ENCODE measurements at regions of chr3 and their contacts with region 1.

Region 1: GRCh38 chr3:123046262-123047061 is 18.9 kb upstream of the SEMA5B start:
- DNase-seq: no peak
- ATAC-seq: no peak
- H3K4me3 Mint-ChIP-seq: no peak overlapping the region
- H3K27ac Mint-ChIP-seq: no peak overlapping the region
- H3K4me1 Mint-ChIP-seq: peaks cover 20% of the 10 kb centered on the region
- H3K27me3 Mint-ChIP-seq: no peaks in the 10 kb centered on the region
- CTCF ChIP-seq: no peak

Region 2: GRCh38 chr3:123066896-123067688 is 20.6 kb after region 1 on chr3 and contains the start of gene PDIA5:
- CTCF ChIA-PET with region 1: interaction called, 14 read pairs
- POLR2A ChIA-PET with region 1: no interaction called
- DNase-seq: peak; percentile 94
- ATAC-seq: peak; percentile 85
- H3K4me3 Mint-ChIP-seq: peak within 1 kb of the TSS; percentile 88
- H3K27ac Mint-ChIP-seq: peak within 1 kb of the TSS; percentile 61; the same call in 1 of the 2 replicates
- H3K4me1 Mint-ChIP-seq: peaks cover 40% of the 10 kb centered on the region
- H3K27me3 Mint-ChIP-seq: peaks cover 33% of the 10 kb centered on the region
- CTCF ChIP-seq: no peak
- total RNA-seq, gene PDIA5: 30.5 to 41.5 TPM (median 34.6 TPM) in 3 replicates

Region 3: DNA sequence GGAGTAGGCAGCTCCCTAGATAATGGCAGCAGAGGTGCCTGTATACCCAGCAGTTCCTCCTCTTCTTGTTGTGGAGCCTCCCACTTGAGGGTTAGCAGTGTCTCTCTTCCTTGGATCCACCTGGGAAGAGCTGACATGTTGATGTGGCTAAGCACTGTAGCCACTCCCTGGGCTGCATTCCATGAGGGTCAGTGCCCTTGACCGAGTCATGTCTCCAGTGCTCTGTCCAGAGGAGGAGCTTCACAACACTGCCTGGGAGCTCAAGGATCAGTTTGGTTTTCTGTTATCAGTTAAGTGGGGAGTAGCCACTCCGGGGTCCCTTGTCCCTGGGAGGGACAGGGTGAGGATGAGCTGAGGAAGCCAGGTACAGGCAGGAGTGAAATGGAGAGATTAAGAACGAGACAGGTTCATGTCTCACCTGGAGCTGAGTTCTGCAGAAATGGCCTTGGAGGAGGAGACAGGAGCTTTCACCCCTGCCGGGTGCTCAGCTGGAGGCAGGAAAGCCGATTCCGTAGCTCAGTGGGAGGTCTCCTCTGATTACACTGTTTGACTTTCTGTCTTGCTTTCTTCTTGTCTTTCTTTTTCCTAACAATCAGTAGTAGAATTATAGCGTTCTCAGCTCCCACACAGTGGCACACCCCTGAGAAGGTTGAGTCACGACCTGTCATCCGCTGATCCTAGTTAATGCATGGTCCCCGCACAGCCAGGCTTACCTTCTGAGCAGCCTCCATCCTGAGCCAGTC is 97.4 kb after region 1 on chr3:
- CTCF ChIA-PET with region 1: interaction called, 10 read pairs
- POLR2A ChIA-PET with region 1: no interaction called
- DNase-seq: peak; percentile 35
- ATAC-seq: peak; percentile 79
- H3K4me3 Mint-ChIP-seq: no peak overlapping the region
- H3K27ac Mint-ChIP-seq: peak overlapping the region; percentile 74
- H3K4me1 Mint-ChIP-seq: peaks cover 23% of the 10 kb centered on the region
- H3K27me3 Mint-ChIP-seq: no peaks in the 10 kb centered on the region
- CTCF ChIP-seq: no peak

Measured in WTC11 (cell line).